Panc1 (cell line): ENCODE measurements at regions of chr5 and their contacts with region 1.

Region 1: DNA sequence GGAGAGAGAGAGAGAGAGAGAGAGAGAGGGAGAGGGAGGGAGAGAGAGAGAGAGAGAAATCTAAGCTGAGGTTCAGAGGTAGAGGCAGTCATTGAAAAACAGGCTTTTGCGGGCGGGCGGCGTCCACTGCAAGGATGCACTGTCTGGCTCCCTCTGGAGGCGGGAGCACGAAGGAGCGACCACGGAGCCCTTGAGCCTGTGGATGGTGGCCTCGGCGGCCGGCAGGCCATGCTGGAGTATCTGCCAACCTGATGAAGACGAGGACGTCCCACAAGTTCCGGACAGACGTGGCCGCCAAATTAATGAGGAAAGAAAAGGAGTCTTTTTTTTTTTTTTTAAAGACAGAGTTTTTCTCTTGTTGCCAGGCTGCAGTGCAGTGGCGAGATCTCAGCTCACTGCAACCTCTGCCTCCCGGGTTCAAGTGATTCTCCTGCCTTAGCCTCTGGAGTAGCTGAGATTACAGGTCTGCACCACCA is 2.2 kb upstream of the CCDC125 start:
- DNase-seq: peak; percentile 42
- ATAC-seq: peak; percentile 92
- H3K4me3 ChIP-seq: no peak overlapping the region; a peak in 1 of 4 replicates
- H3K27ac ChIP-seq: 0 out of 2 replicates have a peak overlapping the region, but pooled peaks have one; percentile 23
- H3K4me1 ChIP-seq: peaks cover 11% of the 10 kb centered on the region
- H3K27me3 ChIP-seq: no peaks in the 10 kb centered on the region
- CTCF ChIP-seq: peak; percentile 94

Region 2: DNA sequence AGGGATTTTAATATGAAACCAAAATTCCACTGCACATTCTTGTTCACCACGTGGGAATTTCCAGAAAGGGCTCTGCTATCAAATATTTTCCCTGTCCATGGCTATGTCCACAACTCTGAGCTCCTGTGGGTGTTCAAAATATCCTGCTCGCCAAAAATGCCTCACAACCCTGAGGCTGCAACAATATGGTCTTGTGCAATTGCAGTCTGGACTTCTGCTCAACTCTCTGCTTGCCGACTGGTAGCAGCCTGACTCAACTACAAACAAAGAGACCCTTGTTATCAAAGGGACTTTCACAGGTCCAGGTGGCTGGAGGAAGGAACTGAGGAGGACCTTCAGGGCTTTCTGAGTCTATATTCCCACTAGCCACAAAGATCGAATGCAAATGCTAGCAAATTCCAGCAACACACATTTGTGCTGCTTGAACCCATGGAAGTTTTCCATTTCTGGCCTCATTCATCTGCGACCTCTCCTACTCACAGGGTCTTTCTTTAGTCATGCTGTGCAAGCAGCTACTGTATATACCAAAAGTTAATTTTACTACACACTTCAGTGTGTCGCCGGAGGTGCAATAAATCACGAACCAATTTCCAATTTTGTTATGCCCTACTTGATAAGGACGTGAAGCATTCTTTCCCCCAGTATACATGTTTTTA is 410.2 kb before region 1 on chr5:
- CTCF ChIA-PET with region 1: no interaction called
- POLR2A ChIA-PET with region 1: no interaction called
- in situ Hi-C with region 1: no loop called
- intact Hi-C with region 1: no loop called
- DNase-seq: no peak
- ATAC-seq: peak; percentile 70
- H3K4me3 ChIP-seq: no peak overlapping the region
- H3K27ac ChIP-seq: no peak overlapping the region
- H3K4me1 ChIP-seq: no peaks in the 10 kb centered on the region
- H3K27me3 ChIP-seq: peaks cover 5% of the 10 kb centered on the region
- CTCF ChIP-seq: no peak

Region 3: GRCh38 chr5:69234457-69235268 is 100.2 kb before region 1 on chr5 and contains the start of gene CDK7:
- CTCF ChIA-PET with region 1: interaction called, 11 read pairs
- POLR2A ChIA-PET with region 1: no interaction called
- in situ Hi-C with region 1: no loop called
- intact Hi-C with region 1: no loop called
- DNase-seq: peak; percentile 82
- ATAC-seq: peak; percentile 99
- H3K4me3 ChIP-seq: peak within 1 kb of the TSS; percentile 87 to 93
- H3K27ac ChIP-seq: peak within 1 kb of the TSS; percentile 88
- H3K4me1 ChIP-seq: peaks cover 24% of the 10 kb centered on the region
- H3K27me3 ChIP-seq: no peaks in the 10 kb centered on the region
- CTCF ChIP-seq: no peak
- total RNA-seq, gene CDK7: 44.4 TPM

Region 4: GRCh38 chr5:69378376-69378775 is 43.5 kb after region 1 on chr5:
- CTCF ChIA-PET with region 1: no interaction called
- POLR2A ChIA-PET with region 1: no interaction called
- in situ Hi-C with region 1: no loop called
- intact Hi-C with region 1: no loop called
- DNase-seq: no peak
- ATAC-seq: no peak
- H3K4me3 ChIP-seq: no peak overlapping the region
- H3K27ac ChIP-seq: no peak overlapping the region
- H3K4me1 ChIP-seq: no peaks in the 10 kb centered on the region
- H3K27me3 ChIP-seq: no peaks in the 10 kb centered on the region
- CTCF ChIP-seq: no peak